ENCODE measurements at regions of chr17 and their contacts with region 1.

Region 1: GRCh38 chr17:62562656-62563055 is 64.8 kb upstream of the MRC2 start:
- DNase-seq: peak; percentile 90
- ATAC-seq: peak; percentile 7; the same call in 1 of the 2 replicates
- H3K4me3 ChIP-seq: no peak overlapping the region
- H3K27ac ChIP-seq: peak overlapping the region; percentile 64
- H3K4me1 ChIP-seq: peaks cover 64% of the 10 kb centered on the region
- H3K27me3 ChIP-seq: no peaks in the 10 kb centered on the region
- CTCF ChIP-seq: no peak

Region 2: DNA sequence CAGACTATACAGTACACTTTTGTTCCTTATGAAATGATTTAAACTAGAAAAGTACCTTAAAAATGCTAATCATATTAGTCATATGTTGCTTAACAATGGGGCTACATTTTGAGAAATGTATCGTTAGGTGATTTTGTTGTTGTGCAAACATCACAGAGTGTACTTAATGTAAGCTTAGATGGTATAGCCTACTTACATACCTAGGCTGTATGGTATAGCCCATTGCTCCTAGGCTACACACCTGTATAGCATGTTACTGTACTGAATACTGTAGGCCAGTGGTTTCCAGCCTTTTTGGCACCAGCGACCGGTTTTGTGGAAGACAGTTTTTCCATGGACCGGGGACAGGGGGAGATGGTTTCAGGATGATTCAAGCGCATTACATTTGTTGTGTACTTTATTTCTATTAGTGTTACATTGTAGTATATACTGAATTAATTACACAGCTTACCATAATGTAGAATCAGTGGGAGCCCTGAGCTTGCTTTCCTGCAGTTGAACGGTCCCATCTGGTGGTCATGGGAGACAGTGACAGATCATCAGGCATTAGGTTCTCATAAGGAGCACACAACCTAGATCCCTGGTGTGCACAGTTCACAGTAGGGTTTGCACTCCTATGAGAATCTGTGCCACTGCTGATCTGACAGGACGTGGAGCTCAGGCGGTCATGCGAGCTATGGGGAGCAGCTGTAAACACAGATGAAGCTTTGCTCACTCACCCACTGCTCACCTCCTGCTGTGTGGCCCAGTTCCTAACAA is 29.9 kb after region 1 on chr17:
- CTCF ChIA-PET with region 1: interaction called, 3 read pairs
- POLR2A ChIA-PET with region 1: no interaction called
- intact Hi-C with region 1: loop called (anchors 2 kb)
- DNase-seq: peak; percentile 83
- ATAC-seq: peak; percentile 92
- H3K4me3 ChIP-seq: no peak overlapping the region
- H3K27ac ChIP-seq: peak overlapping the region; percentile 27
- H3K4me1 ChIP-seq: peaks cover 18% of the 10 kb centered on the region
- H3K27me3 ChIP-seq: no peaks in the 10 kb centered on the region
- CTCF ChIP-seq: peak; percentile 57

Region 3: DNA sequence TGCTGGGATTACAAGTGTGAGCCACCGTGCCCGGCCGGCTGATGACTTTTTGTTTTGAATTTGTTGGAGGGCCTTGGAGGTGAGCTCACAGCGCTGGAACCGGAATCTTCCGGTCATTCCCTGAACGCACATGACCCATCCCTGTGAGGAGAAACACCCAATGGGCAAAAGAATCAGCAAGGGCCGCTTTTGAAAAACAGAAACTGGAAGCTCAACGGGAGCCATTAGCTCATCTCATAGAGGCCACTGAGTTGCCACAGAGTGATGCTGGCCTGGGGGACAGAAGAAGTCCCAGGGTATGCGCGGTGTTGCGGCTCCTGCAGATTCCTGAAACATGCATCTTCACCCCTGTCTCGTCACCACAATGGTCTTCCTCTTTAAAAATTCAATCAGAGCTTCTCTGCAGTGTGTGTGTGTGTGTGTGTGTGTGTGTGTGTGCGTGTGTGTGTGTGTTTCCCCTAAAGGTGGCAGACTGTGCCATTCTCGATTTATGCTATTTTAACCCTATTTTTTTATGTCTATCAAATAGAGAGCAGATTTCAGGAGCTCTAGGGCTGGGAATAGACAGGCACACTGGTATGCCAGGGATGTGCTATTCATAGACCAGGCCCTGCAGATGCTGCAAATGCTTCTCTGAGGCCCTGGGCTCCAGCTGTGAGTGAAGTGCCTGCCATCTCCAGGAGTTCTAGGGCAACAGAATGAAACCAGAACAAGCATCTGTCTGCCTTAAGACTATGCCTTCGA is 177.2 kb after region 1 on chr17:
- CTCF ChIA-PET with region 1: no interaction called
- POLR2A ChIA-PET with region 1: interaction called, 14 read pairs
- intact Hi-C with region 1: no loop called
- DNase-seq: no peak
- ATAC-seq: no peak
- H3K4me3 ChIP-seq: no peak overlapping the region
- H3K27ac ChIP-seq: no peak overlapping the region
- H3K4me1 ChIP-seq: peaks cover 7% of the 10 kb centered on the region
- H3K27me3 ChIP-seq: no peaks in the 10 kb centered on the region
- CTCF ChIP-seq: no peak

Measured in PC-3 (cell line).